ENCODE measurements at regions of chrX and their contacts with region 1.

Region 1: GRCh38 chrX:105282077-105282476 is 61.6 kb upstream of the TEX13A start:
- DNase-seq: peak; percentile 66
- H3K4me3 ChIP-seq: no peak overlapping the region
- H3K27ac ChIP-seq: peak overlapping the region; percentile 60
- H3K4me1 ChIP-seq: peaks cover 15% of the 10 kb centered on the region
- H3K27me3 ChIP-seq: no peaks in the 10 kb centered on the region
- CTCF ChIP-seq: no peak
- POLR2A ChIP-seq: no peak

Region 2: GRCh38 chrX:105006103-105006502 is 276.0 kb before region 1 on chrX:
- CTCF ChIA-PET with region 1: no interaction called
- POLR2A ChIA-PET with region 1: no interaction called
- dilution Hi-C with region 1: no loop called
- intact Hi-C with region 1: no loop called
- DNase-seq: no peak
- H3K4me3 ChIP-seq: no peak overlapping the region
- H3K27ac ChIP-seq: no peak overlapping the region
- H3K4me1 ChIP-seq: no peaks in the 10 kb centered on the region
- H3K27me3 ChIP-seq: no peaks in the 10 kb centered on the region
- CTCF ChIP-seq: no peak
- POLR2A ChIP-seq: no peak

Region 3: DNA sequence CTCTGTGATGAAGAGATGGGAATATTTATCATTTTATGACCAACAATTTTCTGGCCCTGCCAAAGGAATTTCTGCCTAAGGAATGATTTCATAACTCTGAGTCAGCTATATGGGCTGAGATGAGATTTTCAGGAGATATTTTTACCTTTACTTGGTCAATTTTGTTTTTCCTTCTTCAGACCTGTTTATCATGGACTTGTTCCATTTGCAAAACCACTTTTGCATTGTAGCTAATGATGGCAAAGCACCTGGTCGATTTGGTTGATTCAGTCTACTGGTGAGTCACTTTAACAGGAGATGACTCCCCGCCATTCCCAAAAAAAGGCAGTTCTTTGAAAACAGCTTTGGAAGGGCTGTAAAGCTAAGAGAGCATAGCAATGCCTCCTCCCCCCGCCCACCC is 114.8 kb before region 1 on chrX:
- CTCF ChIA-PET with region 1: no interaction called
- POLR2A ChIA-PET with region 1: no interaction called
- dilution Hi-C with region 1: no loop called
- intact Hi-C with region 1: no loop called
- DNase-seq: no peak
- H3K4me3 ChIP-seq: no peak overlapping the region
- H3K27ac ChIP-seq: no peak overlapping the region
- H3K4me1 ChIP-seq: no peaks in the 10 kb centered on the region
- H3K27me3 ChIP-seq: no peaks in the 10 kb centered on the region
- CTCF ChIP-seq: no peak
- POLR2A ChIP-seq: no peak

Region 4: DNA sequence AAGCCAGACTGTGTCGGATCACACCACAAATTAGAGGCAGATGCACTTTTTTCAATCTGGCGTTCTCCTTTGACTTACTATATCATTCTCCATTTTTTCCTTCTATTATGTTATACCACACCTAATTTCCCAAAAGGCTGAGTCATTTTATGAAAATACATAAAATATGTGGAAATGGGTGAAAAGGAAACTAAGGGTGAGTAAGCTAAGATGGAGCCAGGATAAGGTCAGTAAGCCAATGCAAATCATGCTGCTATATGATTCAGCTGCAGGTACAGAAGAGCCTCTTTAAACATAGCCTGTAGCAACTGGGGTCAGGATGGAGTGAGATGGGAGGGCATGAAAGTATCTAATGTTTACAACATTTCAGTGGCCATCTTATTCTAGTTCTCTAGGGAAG is 32.4 kb after region 1 on chrX:
- CTCF ChIA-PET with region 1: no interaction called
- POLR2A ChIA-PET with region 1: no interaction called
- dilution Hi-C with region 1: no loop called
- intact Hi-C with region 1: loop called (anchors 1 kb)
- DNase-seq: peak; percentile 57
- H3K4me3 ChIP-seq: peak overlapping the region in 1 of 3 experiments; percentile 76
- H3K27ac ChIP-seq: peak overlapping the region; percentile 92
- H3K4me1 ChIP-seq: peaks cover 19% of the 10 kb centered on the region
- H3K27me3 ChIP-seq: no peaks in the 10 kb centered on the region
- CTCF ChIP-seq: no peak
- POLR2A ChIP-seq: no peak

Measured in endothelial cell of umbilical vein (primary cell).